Activated CD8-positive, alpha-beta memory T cell treated with anti-CD3 and anti-CD28 coated beads, Interleukin-2, amount 10 ng/mL, durations not matched to agents 7 days and 5 days (primary cell): ENCODE measurements at regions of chr1 and their contacts with region 1.

Region 1: GRCh38 chr1:155078469-155079209 is at the start of gene EFNA3:
- DNase-seq: peak; percentile 66
- ATAC-seq: peak; percentile 59
- H3K4me3 Mint-ChIP-seq: peak within 1 kb of the TSS; percentile 42
- H3K27ac Mint-ChIP-seq: no peak within 1 kb of the TSS
- H3K4me1 Mint-ChIP-seq: peaks cover 49% of the 10 kb centered on the region
- H3K27me3 Mint-ChIP-seq: peaks cover 49% of the 10 kb centered on the region
- total RNA-seq, gene EFNA3: 1.9 to 2.8 TPM

Region 2: GRCh38 chr1:155012026-155012546 is 66.6 kb before region 1 on chr1:
- CTCF ChIA-PET with region 1: no interaction called
- DNase-seq: no peak
- ATAC-seq: no peak
- H3K4me3 Mint-ChIP-seq: no peak overlapping the region
- H3K27ac Mint-ChIP-seq: peak overlapping the region; percentile 64
- H3K4me1 Mint-ChIP-seq: peaks cover 70% of the 10 kb centered on the region
- H3K27me3 Mint-ChIP-seq: no peaks in the 10 kb centered on the region

Region 3: GRCh38 chr1:155044812-155045690 is 33.6 kb before region 1 on chr1:
- CTCF ChIA-PET with region 1: interaction called, 319 read pairs
- DNase-seq: peak; percentile 81
- ATAC-seq: peak; percentile 93
- H3K4me3 Mint-ChIP-seq: no peak overlapping the region
- H3K27ac Mint-ChIP-seq: no peak overlapping the region
- H3K4me1 Mint-ChIP-seq: peaks cover 15% of the 10 kb centered on the region
- H3K27me3 Mint-ChIP-seq: peaks cover 5% of the 10 kb centered on the region

Region 4: GRCh38 chr1:155050560-155051341 is 27.9 kb before region 1 on chr1 and contains the start of gene ADAM15:
- CTCF ChIA-PET with region 1: interaction called, 319 read pairs
- DNase-seq: peak; percentile 83
- ATAC-seq: peak; percentile 90
- H3K4me3 Mint-ChIP-seq: peak within 1 kb of the TSS; percentile 79
- H3K27ac Mint-ChIP-seq: peak within 1 kb of the TSS; percentile 78
- H3K4me1 Mint-ChIP-seq: peaks cover 28% of the 10 kb centered on the region
- H3K27me3 Mint-ChIP-seq: no peaks in the 10 kb centered on the region
- total RNA-seq, gene ADAM15: 41.7 to 47.5 TPM

Region 5: DNA sequence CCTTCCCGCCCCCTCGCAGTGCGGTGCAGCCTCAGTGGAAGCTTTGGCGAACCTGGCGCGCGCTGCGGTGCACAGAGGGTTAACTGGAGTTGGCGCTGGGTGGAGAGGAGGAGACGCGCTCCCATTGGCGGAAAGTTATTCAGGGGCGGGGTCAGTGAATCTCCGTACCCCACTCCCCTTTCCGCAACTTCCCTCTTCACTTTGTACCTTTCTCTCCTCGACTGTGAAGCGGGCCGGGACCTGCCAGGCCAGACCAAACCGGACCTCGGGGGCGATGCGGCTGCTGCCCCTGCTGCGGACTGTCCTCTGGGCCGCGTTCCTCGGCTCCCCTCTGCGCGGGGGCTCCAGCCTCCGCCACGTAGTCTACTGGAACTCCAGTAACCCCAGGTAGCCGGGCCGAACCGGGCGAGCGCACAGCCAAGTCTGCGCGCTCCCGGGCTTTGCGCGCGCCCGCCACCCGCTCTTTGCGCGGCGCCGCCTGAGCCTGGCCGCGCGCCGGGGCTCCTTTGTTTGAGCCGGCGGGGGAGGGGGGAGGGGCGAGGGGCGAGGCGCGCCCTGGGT is 15.0 kb before region 1 on chr1 and contains the start of gene EFNA4:
- CTCF ChIA-PET with region 1: interaction called, 319 read pairs
- DNase-seq: peak; percentile 90
- ATAC-seq: peak; percentile 88
- H3K4me3 Mint-ChIP-seq: peak within 1 kb of the TSS; percentile 83
- H3K27ac Mint-ChIP-seq: peak within 1 kb of the TSS; percentile 8
- H3K4me1 Mint-ChIP-seq: peaks cover 26% of the 10 kb centered on the region
- H3K27me3 Mint-ChIP-seq: peaks cover 4% of the 10 kb centered on the region
- total RNA-seq, gene EFNA4: 3.8 to 5.3 TPM

Region 6: GRCh38 chr1:155103325-155103724 is 24.7 kb after region 1 on chr1:
- CTCF ChIA-PET with region 1: no interaction called
- DNase-seq: no peak
- ATAC-seq: no peak
- H3K4me3 Mint-ChIP-seq: no peak overlapping the region
- H3K27ac Mint-ChIP-seq: no peak overlapping the region
- H3K4me1 Mint-ChIP-seq: no peaks in the 10 kb centered on the region
- H3K27me3 Mint-ChIP-seq: peaks cover 12% of the 10 kb centered on the region

Region 7: GRCh38 chr1:155295183-155295941 is 216.7 kb after region 1 on chr1:
- CTCF ChIA-PET with region 1: no interaction called
- DNase-seq: no peak
- ATAC-seq: no peak
- H3K4me3 Mint-ChIP-seq: no peak overlapping the region
- H3K27ac Mint-ChIP-seq: no peak overlapping the region
- H3K4me1 Mint-ChIP-seq: peaks cover 7% of the 10 kb centered on the region
- H3K27me3 Mint-ChIP-seq: peaks cover 46% of the 10 kb centered on the region